ENCODE measurements at regions of chr5 and their contacts with region 1.

Region 1: DNA sequence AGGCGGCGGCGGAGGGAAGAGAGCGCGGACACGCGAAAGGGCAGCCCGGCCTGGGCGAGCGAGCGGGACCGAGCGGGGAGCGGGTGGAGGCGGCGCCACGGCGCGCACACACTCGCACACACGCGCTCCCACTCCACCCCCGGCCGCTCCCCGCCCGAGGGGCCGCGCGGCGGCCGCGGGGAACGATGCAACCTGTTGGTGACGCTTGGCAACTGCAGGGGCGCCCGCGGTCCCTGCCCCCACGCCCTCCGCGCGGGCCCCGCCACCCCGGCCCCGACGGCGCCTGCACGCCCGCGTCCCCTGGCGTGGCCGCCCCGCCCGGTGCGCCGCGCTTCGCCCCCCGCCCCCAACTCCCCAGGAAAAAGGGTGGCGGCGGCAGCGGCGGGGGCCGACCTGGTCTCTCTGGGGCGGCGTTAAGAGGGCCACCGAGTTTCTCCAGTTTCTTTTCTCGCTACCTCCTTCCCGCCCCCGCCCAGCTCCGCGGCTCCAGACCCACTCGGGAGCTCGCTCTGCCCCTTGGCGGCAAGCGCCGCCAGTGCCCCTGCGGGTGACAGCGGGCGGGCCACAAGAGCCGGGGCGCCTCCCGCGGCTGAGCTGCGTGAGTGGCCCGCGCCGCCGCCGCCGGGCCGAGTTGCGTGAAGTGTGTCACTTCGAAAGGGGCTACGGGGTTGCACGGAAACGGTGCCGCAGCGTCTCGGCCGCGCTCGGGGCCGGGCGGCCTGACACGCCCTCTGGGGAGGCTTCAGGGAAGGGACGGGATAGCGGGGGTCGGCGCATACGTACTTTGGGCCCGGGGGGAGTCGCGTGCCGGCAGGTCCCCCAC is at the start of gene NR3C1:
- DNase-seq: peak; percentile 89 to 95
- ATAC-seq: peak; percentile 71 to 77 (median 75)
- H3K4me3 ChIP-seq: peak within 1 kb of the TSS; percentile 93
- H3K27ac ChIP-seq: peak within 1 kb of the TSS; percentile 99
- H3K4me1 ChIP-seq: peaks cover 5% of the 10 kb centered on the region
- H3K27me3 ChIP-seq: no peaks in the 10 kb centered on the region
- CTCF ChIP-seq: peak; percentile 74
- total RNA-seq, gene NR3C1: 55.8 to 89.7 (median 63.6) TPM

Region 2: GRCh38 chr5:143002459-143003328 is 401.1 kb before region 1 on chr5:
- intact Hi-C with region 1: loop called in 1 of 2 experiments (anchors 1 kb)
- DNase-seq: no peak
- ATAC-seq: peak; percentile 53 to 60 (median 55)
- H3K4me3 ChIP-seq: no peak overlapping the region
- H3K27ac ChIP-seq: peak overlapping the region; percentile 62
- H3K4me1 ChIP-seq: peaks cover 24% of the 10 kb centered on the region
- H3K27me3 ChIP-seq: no peaks in the 10 kb centered on the region
- CTCF ChIP-seq: peak; percentile 57

Region 3: GRCh38 chr5:143066556-143067281 is 337.1 kb before region 1 on chr5:
- intact Hi-C with region 1: loop called in 1 of 2 experiments (anchors 5 kb)
- DNase-seq: peak; percentile 49 to 72
- ATAC-seq: peak; percentile 67 to 79 (median 72)
- H3K4me3 ChIP-seq: peak overlapping the region; percentile 23
- H3K27ac ChIP-seq: peak overlapping the region; percentile 81
- H3K4me1 ChIP-seq: peaks cover 58% of the 10 kb centered on the region
- H3K27me3 ChIP-seq: no peaks in the 10 kb centered on the region
- CTCF ChIP-seq: no peak

Region 4: DNA sequence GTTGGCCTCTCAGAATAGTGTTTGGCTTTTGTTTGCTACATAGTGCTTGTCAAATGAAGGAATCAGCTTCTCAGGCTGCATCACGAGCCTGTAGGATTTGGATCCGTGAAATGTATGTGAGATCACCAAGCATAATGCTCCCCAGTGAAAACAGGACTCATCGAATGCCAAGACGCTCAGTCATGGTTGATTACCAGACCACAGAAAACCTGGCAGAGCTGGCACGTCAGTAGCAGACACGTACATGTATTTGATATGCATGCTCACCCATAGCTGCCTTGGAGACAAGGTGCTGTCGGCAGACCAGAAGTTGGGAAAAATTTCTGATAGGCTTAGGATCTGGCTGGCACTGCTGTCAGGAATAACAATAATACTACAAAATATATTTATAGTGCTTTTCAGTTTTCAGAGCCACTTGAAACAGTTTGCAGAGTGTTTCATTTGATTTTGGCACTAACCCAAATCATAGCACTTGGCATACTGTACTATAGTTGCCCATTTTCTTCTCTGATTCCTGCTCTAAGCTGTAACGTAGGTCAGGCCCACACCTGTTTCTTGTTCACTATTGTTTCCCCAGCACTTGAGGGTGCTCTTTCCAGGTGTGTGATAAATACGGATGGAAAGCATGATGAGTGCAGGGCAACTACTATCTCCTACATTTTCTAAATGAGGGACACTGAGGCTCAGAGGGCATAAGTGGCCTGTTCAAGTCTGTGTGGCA is 226.4 kb before region 1 on chr5:
- intact Hi-C with region 1: loop called in 1 of 2 experiments (anchors 5 kb)
- DNase-seq: peak in 1 of 2 donors; percentile 77
- ATAC-seq: peak; percentile 85 to 88 (median 87)
- H3K4me3 ChIP-seq: no peak overlapping the region
- H3K27ac ChIP-seq: peak overlapping the region; percentile 85
- H3K4me1 ChIP-seq: peaks cover 33% of the 10 kb centered on the region
- H3K27me3 ChIP-seq: no peaks in the 10 kb centered on the region
- CTCF ChIP-seq: no peak

Region 5: DNA sequence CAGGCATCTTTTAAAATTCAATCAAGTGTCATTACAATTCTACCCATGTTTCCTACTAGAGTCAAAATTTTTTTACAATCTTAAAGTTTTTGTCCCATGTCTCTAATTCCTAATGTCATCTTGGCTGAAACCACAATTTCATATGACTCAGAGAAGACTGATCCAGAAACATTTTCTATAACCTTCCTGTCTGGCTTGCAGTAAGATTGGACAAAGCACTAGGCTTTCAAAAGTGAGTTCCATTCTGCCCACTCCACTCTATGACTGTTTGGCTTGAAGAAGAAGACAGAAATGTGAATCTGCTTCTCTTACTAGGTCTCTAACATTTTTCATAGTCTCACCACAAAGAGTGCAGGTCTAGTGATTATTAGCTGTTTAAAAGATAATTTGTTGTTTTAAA is 89.1 kb before region 1 on chr5:
- intact Hi-C with region 1: loop called in 1 of 2 experiments (anchors 5 kb)
- DNase-seq: no peak
- ATAC-seq: peak; percentile 43 to 63 (median 52)
- H3K4me3 ChIP-seq: no peak overlapping the region
- H3K27ac ChIP-seq: peak overlapping the region; percentile 86
- H3K4me1 ChIP-seq: peaks cover 68% of the 10 kb centered on the region
- H3K27me3 ChIP-seq: no peaks in the 10 kb centered on the region
- CTCF ChIP-seq: no peak

Region 6: GRCh38 chr5:143824851-143825720 is 421.3 kb after region 1 on chr5:
- intact Hi-C with region 1: loop called in 1 of 2 experiments (anchors 5 kb)
- DNase-seq: peak; percentile 71 to 87
- ATAC-seq: peak; percentile 93 to 99 (median 97)
- H3K4me3 ChIP-seq: no peak overlapping the region
- H3K27ac ChIP-seq: no peak overlapping the region
- H3K4me1 ChIP-seq: peaks cover 8% of the 10 kb centered on the region
- H3K27me3 ChIP-seq: no peaks in the 10 kb centered on the region
- CTCF ChIP-seq: peak; percentile 99